Aorta (tissue), 5 donors: ENCODE measurements at regions of chr6 and their contacts with region 1.

Region 1: DNA sequence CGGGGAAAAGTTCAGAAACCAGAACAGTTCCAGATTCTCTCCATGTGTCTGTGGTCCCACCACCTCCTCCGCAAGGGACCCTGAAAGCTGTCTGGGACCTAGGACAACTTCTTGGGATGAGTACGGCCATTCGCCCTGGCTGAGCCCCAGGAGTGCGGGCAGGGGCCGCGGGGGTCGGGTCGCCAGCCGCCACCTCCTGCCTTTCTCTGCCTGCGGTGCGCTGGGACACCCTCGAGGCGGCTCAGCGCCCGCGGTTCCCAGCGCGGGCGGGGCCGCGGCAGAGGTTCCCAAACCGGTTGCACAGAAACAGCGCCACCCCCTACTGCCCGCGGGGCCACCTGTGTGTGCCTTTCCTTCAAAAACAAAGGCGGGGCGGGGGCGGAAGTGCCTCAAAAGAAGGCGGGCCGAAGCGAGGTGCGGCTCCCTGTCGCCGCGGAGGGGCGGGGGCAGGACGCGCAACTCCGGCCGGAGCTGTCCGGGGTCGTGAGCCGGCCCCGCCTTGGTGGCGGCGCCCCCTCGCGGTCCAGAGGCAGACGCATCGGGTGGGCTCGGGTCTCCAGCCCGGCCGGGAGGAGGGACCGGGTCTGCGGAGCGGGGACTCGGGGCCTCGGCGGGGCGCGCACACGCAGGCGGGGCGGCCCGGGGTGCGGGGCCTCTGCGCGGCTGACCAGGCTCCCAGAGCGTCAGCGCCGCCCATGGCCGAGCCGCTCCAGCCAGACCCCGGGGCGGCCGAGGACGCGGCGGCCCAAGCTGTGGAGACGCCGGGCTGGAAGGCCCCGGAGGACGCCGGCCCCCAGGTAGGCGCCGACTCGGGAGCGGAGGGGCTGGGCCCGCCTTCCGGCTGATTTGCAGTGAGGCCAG is at the start of gene HEBP2:
- DNase-seq: peak; percentile 94 to 97
- ATAC-seq: peak; percentile 94
- H3K4me3 ChIP-seq: peak within 1 kb of the TSS; percentile 24 to 90
- H3K27ac ChIP-seq: peak within 1 kb of the TSS; percentile 39 to 94
- H3K4me1 ChIP-seq: no peaks in the 10 kb centered on the region
- H3K27me3 ChIP-seq: no peaks in the 10 kb centered on the region
- total RNA-seq, gene HEBP2: 58.6 to 68.0 TPM

Region 2: DNA sequence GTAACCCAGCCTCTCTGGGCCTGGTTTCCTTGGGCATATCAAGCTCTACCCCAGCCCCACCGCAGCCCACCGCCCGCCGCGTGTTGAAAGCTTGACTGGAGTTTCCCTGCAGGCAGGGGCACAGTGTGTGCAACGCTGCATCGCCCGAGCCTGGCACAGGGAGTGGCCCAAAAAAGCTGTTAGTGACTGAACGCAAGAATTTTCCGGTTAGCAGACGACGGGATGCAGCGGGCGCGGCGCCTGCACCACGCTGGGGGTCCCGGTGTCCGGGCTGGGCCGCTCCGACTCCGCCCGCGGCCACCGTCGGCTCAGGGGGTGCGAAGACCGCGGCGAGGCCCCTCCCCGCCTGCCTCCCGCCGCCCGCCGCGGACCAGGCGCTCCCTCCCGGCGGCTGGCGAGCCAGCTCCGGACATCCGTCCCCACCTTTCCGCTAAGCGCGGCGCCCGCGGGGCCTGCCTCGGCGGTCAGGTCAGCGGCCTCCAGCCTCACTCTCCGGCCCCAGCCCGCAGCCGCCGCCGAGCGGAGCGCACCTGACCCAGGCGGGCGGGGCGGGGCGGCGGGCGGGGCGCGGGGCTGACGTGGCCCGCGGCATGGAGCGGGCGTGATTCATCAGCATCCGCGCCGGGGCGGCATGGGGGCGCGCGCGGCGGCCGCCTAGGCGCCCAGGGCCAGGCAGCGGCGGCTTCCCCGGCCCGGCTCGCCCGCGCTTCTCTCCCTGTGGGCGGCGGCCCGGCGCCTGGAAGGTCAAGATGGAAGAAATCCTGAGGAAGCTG is 242.5 kb before region 1 on chr6 and contains the start of gene ARFGEF3:
- intact Hi-C with region 1: loop called in 1 of 2 experiments (anchors 5 kb)
- DNase-seq: peak; percentile 47 to 85
- ATAC-seq: peak; percentile 70
- H3K4me3 ChIP-seq: peak within 1 kb of the TSS; percentile 66 to 70
- H3K27ac ChIP-seq: no peak within 1 kb of the TSS
- H3K4me1 ChIP-seq: no peaks in the 10 kb centered on the region
- H3K27me3 ChIP-seq: no peaks in the 10 kb centered on the region
- total RNA-seq, gene ARFGEF3: 1.6 to 2.5 TPM

Region 3: GRCh38 chr6:138176652-138177232 is 227.3 kb before region 1 on chr6:
- intact Hi-C with region 1: no loop called
- DNase-seq: no peak
- ATAC-seq: no peak
- H3K4me3 ChIP-seq: no peak overlapping the region
- H3K27ac ChIP-seq: no peak overlapping the region
- H3K4me1 ChIP-seq: no peaks in the 10 kb centered on the region
- H3K27me3 ChIP-seq: no peaks in the 10 kb centered on the region